ENCODE measurements at regions of chr14 and their contacts with region 1.

Region 1: DNA sequence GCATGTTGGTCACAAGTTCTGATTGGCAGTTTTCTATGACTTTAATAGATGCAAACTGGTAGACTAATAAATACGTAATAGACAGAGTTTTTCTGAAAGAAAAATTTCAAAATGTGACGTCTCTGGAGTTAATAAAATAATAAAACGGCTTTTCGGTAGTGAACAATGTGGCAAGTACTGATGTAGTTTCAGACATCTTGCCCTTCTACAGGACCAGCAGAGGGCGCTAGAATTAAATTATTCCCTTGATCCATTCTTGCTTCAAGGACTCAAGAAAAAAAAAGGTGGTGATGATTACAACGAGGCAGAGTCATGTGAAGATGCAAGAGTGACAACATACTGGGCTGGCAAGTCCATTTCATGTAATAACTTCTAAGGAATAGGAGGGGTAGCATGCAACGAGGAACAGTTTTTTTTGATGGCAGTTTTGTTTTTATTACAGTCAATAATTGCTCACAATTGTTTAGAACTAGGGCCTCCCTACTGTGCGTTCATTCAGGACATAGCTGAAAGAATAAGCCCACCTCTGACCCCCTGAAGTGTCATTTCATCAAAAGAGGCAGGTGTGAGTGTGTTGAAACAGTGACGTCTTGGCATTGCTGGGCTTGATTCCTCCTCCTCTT is 101.0 kb upstream of the GZMB start:
- DNase-seq: peak in 1 of 2 donors; percentile 49
- ATAC-seq: peak; percentile 77

Region 2: GRCh38 chr14:25132732-25133422 is 397.9 kb after region 1 on chr14:
- intact Hi-C with region 1: loop called in 1 of 2 experiments (anchors 10 kb)
- DNase-seq: peak; percentile 70 to 73
- ATAC-seq: peak; percentile 99

Measured in left colon (tissue), 2 donors.